Aorta (tissue), 5 donors: ENCODE measurements at regions of chr3 and their contacts with region 1.

Region 1: DNA sequence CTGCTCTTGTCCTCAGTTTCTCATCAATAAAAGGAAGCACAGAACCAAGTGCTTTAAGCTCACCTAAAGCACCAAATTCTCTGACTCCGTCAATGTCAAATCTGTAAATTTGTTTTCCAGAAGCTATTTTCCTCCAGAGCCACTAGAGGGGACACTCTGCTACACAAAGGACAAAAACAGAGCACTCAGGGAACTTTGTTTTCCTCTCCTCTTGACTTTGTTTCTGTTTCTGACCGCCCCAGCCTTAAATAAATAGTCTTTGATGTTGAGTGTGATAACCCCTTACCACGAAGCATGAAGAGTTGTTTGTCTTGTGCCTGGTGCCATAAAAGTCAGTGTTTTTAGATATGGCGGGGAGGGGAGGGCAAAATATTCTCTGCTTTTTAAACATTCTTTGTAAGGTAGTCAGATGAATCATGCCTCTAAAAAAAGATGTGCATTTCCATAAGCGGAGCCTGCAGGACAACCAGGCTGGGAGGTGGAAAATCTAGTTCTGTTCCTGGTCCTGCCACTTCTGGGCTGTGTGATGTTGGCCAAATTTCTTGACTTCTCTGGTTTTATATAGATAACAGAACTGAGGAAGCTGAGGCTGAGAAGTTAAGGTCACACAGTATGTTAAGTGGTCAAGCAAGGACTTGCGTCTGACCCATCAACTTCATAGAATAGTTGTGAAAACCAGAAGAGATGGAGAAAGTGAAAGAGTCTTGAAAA is 7.3 kb upstream of the ZBTB38 start:
- DNase-seq: peak in 1 of 2 donors; percentile 49
- ATAC-seq: peak; percentile 90
- H3K4me3 ChIP-seq: no peak overlapping the region
- H3K27ac ChIP-seq: peak overlapping the region; percentile 59 to 73
- H3K4me1 ChIP-seq: peaks cover 0 to 4% of the 10 kb centered on the region in 2 donors
- H3K27me3 ChIP-seq: no peaks in the 10 kb centered on the region

Region 2: DNA sequence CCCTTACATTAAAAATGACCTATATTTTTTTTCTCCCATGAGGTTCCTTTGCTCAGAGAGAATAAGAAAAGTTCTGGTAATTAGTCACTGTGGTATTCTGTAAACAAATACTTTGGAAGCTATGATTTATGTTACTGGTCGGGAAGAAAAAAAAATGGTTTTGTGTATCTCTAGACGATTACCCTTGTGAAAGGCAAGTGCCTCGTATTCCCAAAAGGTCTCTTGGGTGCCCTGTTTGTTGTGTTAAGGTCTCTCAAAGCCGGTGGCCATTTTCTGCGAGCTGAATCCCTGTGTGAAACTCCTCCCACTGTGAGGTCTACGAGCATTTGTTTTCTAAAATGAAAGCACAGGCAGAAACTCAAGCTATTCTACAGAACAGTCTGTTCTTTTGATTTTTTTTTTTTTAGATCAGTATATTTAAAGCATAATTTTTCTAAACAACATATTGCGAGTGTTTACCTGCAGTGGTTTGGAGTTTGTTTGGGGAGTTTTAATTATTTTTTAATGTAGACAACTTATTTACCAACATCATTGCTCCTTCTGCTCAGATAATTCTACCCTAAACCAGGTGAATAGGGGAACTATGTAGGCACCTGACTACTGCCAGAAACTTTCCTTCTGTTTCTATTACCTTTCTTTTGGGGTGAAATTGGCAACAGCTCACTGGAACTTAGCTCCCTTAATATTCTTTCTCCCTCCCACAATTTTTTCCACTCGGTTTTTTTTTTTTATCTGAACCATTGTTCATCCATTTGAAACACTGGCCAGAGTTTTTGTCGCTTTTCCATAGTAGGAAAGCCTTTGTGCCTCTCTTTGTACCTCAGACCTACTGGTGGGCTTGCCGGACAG is 51.3 kb after region 1 on chr3:
- intact Hi-C with region 1: loop called in 1 of 2 experiments (anchors 5 kb)
- DNase-seq: peak in 1 of 2 donors; percentile 70
- ATAC-seq: peak; percentile 83
- H3K4me3 ChIP-seq: peak overlapping the region; percentile 21 to 77
- H3K27ac ChIP-seq: peak overlapping the region; percentile 50 to 99
- H3K4me1 ChIP-seq: peaks cover 4% of the 10 kb centered on the region in 2 donors
- H3K27me3 ChIP-seq: no peaks in the 10 kb centered on the region

Region 3: GRCh38 chr3:141452036-141452435 is 91.0 kb after region 1 on chr3:
- intact Hi-C with region 1: loop called in 1 of 2 experiments (anchors 2 kb)
- DNase-seq: no peak
- ATAC-seq: peak; percentile 81
- H3K4me3 ChIP-seq: no peak overlapping the region
- H3K27ac ChIP-seq: peak overlapping the region in 1 of 2 donors; percentile 37
- H3K4me1 ChIP-seq: peaks cover 0 to 3% of the 10 kb centered on the region in 2 donors
- H3K27me3 ChIP-seq: no peaks in the 10 kb centered on the region